ENCODE measurements at regions of chr18 and their contacts with region 1.

Region 1: GRCh38 chr18:43952398-43952797 is 675.1 kb upstream of the SYT4 start:
- DNase-seq: no peak
- ATAC-seq: no peak
- H3K4me3 ChIP-seq: no peak overlapping the region
- H3K27ac ChIP-seq: no peak overlapping the region
- H3K4me1 ChIP-seq: peaks cover 0 to 4% (median 0%) of the 10 kb centered on the region in 12 donors
- H3K27me3 ChIP-seq: no peaks in the 10 kb centered on the region
- CTCF ChIP-seq: no peak
- POLR2A ChIP-seq: no peak

Region 2: GRCh38 chr18:43650426-43650825 is 302.0 kb before region 1 on chr18:
- intact Hi-C with region 1: loop called in 1 of 10 experiments (anchors 10 kb)
- DNase-seq: no peak
- ATAC-seq: no peak
- H3K4me3 ChIP-seq: no peak overlapping the region
- H3K27ac ChIP-seq: no peak overlapping the region
- H3K4me1 ChIP-seq: no peaks in the 10 kb centered on the region
- H3K27me3 ChIP-seq: no peaks in the 10 kb centered on the region
- CTCF ChIP-seq: no peak
- POLR2A ChIP-seq: no peak

Region 3: DNA sequence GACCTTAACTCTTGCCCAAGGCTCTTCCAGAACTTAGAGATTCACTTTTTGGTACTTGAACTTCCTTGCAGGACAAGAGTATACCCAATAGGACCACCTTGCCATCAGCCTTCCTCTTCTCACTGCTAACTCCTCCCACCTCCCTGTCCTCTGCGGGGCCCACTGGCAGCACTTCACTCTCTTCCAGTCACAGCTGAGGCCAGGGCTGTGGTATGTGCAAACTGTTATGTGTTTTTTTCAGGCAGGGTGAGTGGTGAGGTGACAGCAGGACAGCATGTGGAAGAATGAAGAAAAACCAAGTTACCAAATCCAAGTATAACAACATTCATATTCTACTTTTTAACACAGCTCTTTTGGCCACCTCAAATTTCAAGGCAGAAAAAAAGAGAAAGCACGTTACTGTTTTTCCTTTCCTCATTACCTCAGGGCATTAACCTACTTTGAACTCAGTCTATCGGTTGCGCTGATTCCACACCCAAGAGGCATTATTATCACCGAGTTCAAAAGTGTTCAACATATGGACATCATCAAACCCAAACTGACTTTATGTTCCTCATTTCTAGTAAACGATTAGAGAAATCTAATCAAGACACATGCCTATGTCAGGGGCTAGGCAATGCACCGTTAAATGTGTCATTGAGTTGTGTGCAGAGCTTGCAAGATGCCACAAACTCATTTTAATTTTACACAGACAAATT is 69.9 kb before region 1 on chr18:
- intact Hi-C with region 1: no loop called
- DNase-seq: peak in 4 of 5 donors; percentile 12 to 52 (median 34)
- ATAC-seq: peak; percentile 67 to 89 (median 81)
- H3K4me3 ChIP-seq: no peak overlapping the region
- H3K27ac ChIP-seq: no peak overlapping the region
- H3K4me1 ChIP-seq: peaks cover 0 to 5% (median 0%) of the 10 kb centered on the region in 12 donors
- H3K27me3 ChIP-seq: no peaks in the 10 kb centered on the region
- CTCF ChIP-seq: no peak
- POLR2A ChIP-seq: no peak

Region 4: GRCh38 chr18:44227501-44227900 is 275.1 kb after region 1 on chr18:
- intact Hi-C with region 1: no loop called
- DNase-seq: no peak
- ATAC-seq: no peak
- H3K4me3 ChIP-seq: no peak overlapping the region
- H3K27ac ChIP-seq: no peak overlapping the region
- H3K4me1 ChIP-seq: peaks cover 0 to 10% (median 0%) of the 10 kb centered on the region in 12 donors
- H3K27me3 ChIP-seq: no peaks in the 10 kb centered on the region
- CTCF ChIP-seq: no peak
- POLR2A ChIP-seq: no peak